ENCODE measurements at regions of chr3 and their contacts with region 1.

Region 1: DNA sequence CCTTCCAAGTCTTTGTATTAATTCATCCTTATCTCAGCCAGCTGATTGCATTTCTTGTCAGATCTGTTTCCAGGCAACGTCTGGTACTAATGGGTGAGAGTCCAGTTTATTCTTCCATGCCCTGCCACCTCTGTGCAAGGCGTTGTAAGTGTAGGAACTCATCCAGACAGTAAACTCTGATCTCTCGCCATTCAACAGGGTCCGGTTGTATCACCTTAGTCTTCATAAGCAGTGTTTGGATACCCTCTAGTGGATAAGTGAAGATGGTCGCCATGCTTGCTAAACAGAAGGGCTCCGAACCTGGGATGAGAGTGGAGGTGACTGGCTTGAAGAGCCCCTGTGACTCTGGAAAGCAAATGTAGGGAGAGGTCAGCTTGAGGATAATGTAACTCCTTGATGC is 51.6 kb upstream of the CMTM7 start:
- DNase-seq: no peak

Region 2: GRCh38 chr3:32296256-32297204 is 43.5 kb before region 1 on chr3:
- intact Hi-C with region 1: loop called (anchors 2 kb)
- DNase-seq: peak; percentile 80